ENCODE measurements at regions of chr9 and their contacts with region 1.

Region 1: DNA sequence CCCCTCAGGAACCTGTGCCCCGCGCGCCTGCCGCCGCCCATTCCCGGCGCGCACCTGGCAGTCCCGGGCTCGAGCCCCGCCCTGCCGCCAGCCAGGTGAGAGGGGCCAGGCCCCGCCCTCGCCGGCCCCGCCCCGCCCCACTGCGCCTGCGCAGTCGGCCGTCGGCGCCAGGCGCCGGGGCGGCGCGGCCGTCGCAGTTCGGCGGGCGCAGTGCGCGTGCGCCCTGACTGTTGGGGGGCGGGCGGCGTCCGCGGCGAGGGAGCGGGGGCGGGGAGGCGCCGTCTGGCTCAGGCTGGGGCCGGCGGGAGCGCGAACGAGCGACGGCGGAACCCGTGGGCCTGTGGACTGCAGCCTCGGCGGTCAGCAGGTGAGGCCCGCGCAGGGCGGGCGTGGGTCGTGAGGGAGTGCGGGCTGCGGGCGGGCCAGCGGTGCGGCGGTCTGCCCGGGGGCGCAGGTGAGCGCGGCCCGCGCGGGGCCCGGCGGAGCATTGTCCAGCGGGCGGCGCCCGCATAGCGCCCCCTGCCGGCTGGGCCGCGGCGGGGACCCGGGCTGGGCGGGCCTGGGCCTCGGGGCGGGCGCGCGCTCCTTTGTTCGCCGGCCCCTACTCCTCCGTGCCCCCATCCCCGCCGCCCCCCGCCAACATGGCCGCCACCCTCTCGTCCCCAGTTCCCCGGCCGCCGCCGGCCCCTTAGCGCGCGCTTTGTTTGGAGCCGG is at the start of gene SPIN1:
- DNase-seq: peak; percentile 96
- ATAC-seq: peak; percentile 83
- H3K4me3 Mint-ChIP-seq: peak within 1 kb of the TSS; percentile 90
- H3K27ac Mint-ChIP-seq: peak within 1 kb of the TSS; percentile 84
- H3K4me1 Mint-ChIP-seq: peaks cover 26% of the 10 kb centered on the region
- H3K27me3 Mint-ChIP-seq: no peaks in the 10 kb centered on the region
- CTCF ChIP-seq: no peak
- total RNA-seq, gene SPIN1: 20.7 TPM in 2 replicates

Region 2: GRCh38 chr9:86948074-86948929 is 1440.0 kb before region 1 on chr9:
- CTCF ChIA-PET with region 1: no interaction called
- POLR2A ChIA-PET with region 1: no interaction called
- intact Hi-C with region 1: loop called (anchors 5 kb)
- DNase-seq: peak; percentile 42
- ATAC-seq: peak; percentile 72
- H3K4me3 Mint-ChIP-seq: peak overlapping the region; percentile 82
- H3K27ac Mint-ChIP-seq: no peak overlapping the region
- H3K4me1 Mint-ChIP-seq: peaks cover 19% of the 10 kb centered on the region
- H3K27me3 Mint-ChIP-seq: peaks cover 20% of the 10 kb centered on the region
- CTCF ChIP-seq: no peak

Region 3: DNA sequence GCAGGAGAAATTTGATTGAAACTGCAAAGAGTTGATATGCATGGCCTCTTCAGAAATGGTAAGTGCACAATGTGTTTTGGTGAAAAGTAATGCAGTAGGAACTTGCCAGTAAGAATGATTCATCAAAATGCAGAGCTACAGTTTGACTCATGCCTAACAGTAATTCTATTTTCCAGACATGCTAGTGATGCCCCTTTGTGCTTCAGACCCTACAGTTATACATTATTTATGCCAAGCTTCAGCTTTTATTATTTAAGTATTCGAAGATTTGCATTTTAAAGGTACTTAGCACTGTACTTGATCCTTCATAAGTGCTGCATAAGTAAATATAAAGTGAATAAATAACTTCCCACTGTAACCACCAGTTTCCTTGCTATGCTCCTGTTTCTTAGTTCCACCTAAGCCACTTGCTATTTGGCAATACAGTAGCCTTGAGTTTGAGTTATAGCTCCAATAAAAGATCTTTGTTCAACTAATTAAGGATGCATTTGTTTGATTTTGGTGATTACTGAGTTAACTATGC is 509.3 kb before region 1 on chr9:
- CTCF ChIA-PET with region 1: no interaction called
- POLR2A ChIA-PET with region 1: no interaction called
- intact Hi-C with region 1: no loop called
- DNase-seq: no peak
- ATAC-seq: no peak
- H3K4me3 Mint-ChIP-seq: no peak overlapping the region
- H3K27ac Mint-ChIP-seq: no peak overlapping the region
- H3K4me1 Mint-ChIP-seq: no peaks in the 10 kb centered on the region
- H3K27me3 Mint-ChIP-seq: peaks cover 2% of the 10 kb centered on the region
- CTCF ChIP-seq: no peak

Region 4: GRCh38 chr9:87973730-87974292 is 414.5 kb before region 1 on chr9:
- CTCF ChIA-PET with region 1: no interaction called
- POLR2A ChIA-PET with region 1: no interaction called
- intact Hi-C with region 1: loop called (anchors 1 kb)
- DNase-seq: no peak
- ATAC-seq: peak; percentile 9
- H3K4me3 Mint-ChIP-seq: peak overlapping the region; percentile 81
- H3K27ac Mint-ChIP-seq: peak overlapping the region; percentile 80
- H3K4me1 Mint-ChIP-seq: peaks cover 19% of the 10 kb centered on the region
- H3K27me3 Mint-ChIP-seq: peaks cover 7% of the 10 kb centered on the region
- CTCF ChIP-seq: no peak

Region 5: DNA sequence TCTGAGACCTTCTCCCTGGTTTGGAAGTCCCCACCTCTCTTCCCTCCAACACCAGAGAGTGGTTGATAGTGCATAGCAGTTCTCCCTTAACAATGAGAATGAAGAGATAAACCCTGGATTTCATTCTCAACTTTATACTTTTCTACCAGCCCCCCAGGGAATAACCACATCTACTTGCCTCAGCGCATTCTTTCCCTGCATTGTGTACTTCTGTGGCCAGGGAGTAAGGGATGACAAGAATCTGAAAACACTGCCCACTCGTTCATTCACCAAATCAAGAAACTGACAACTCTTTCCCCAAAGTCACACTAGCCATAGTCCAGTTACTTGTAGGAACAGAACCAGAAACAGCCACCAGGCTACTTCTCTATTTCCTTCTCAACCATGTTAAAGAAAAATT is 46.1 kb before region 1 on chr9:
- CTCF ChIA-PET with region 1: no interaction called
- POLR2A ChIA-PET with region 1: no interaction called
- intact Hi-C with region 1: no loop called
- DNase-seq: no peak
- ATAC-seq: no peak
- H3K4me3 Mint-ChIP-seq: no peak overlapping the region
- H3K27ac Mint-ChIP-seq: no peak overlapping the region
- H3K4me1 Mint-ChIP-seq: no peaks in the 10 kb centered on the region
- H3K27me3 Mint-ChIP-seq: no peaks in the 10 kb centered on the region
- CTCF ChIP-seq: no peak